CD8-positive, alpha-beta T cell (primary cell): ENCODE measurements at regions of chr11 and their contacts with region 1.

Region 1: DNA sequence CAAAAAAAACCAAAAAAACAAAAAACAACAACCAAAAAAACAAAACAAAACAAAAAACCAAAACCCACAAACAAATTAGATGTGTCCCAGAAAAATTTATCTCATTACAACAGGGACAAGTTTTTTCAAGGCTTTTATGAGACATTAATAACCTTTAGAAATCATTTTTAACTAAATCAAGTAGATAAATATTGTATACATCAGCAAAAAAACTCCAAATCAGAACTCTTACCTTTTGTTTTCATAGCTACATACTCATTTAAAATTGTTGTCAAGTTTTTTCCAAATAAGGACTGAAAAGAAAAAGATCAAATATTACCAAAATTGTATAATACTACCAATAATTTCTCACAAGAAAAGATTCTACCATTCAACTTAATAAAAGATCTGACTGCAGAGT is 28.7 kb downstream of the NPAT start:
- DNase-seq: no peak
- ATAC-seq: no peak
- H3K4me3 ChIP-seq: no peak overlapping the region
- H3K4me3 Mint-ChIP-seq: no peak overlapping the region
- H3K27ac ChIP-seq: no peak overlapping the region
- H3K27ac Mint-ChIP-seq: no peak overlapping the region
- H3K4me1 ChIP-seq: peaks cover 12% of the 10 kb centered on the region
- H3K4me1 Mint-ChIP-seq: peaks cover 32% of the 10 kb centered on the region
- H3K27me3 ChIP-seq: no peaks in the 10 kb centered on the region
- H3K27me3 Mint-ChIP-seq: no peaks in the 10 kb centered on the region
- CTCF ChIP-seq: no peak

Region 2: DNA sequence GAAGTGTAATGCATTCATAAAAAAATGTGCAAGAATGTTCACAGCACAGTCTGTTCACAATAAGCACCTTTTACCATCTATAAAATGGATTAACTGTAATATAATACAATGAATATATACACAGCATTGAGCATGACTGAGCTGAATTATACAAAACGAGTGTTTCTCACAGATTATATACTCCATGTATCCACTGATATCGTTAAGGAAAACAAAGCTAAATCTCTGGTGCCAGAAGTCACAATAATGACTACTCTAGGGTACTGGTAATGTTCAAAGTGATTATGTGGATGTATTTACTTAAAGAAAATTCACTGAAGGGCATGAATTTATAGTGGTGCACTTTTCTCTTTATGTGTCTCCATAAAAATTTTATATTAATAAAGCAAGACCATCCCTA is 39.1 kb before region 1 on chr11:
- CTCF ChIA-PET with region 1: no interaction called
- POLR2A ChIA-PET with region 1: no interaction called
- intact Hi-C with region 1: loop called in 1 of 2 experiments (anchors 5 kb)
- DNase-seq: no peak
- ATAC-seq: no peak
- H3K4me3 ChIP-seq: no peak overlapping the region
- H3K4me3 Mint-ChIP-seq: no peak overlapping the region
- H3K27ac ChIP-seq: no peak overlapping the region
- H3K27ac Mint-ChIP-seq: no peak overlapping the region
- H3K4me1 ChIP-seq: no peaks in the 10 kb centered on the region
- H3K4me1 Mint-ChIP-seq: peaks cover 5% of the 10 kb centered on the region
- H3K27me3 ChIP-seq: no peaks in the 10 kb centered on the region
- H3K27me3 Mint-ChIP-seq: no peaks in the 10 kb centered on the region
- CTCF ChIP-seq: no peak

Region 3: DNA sequence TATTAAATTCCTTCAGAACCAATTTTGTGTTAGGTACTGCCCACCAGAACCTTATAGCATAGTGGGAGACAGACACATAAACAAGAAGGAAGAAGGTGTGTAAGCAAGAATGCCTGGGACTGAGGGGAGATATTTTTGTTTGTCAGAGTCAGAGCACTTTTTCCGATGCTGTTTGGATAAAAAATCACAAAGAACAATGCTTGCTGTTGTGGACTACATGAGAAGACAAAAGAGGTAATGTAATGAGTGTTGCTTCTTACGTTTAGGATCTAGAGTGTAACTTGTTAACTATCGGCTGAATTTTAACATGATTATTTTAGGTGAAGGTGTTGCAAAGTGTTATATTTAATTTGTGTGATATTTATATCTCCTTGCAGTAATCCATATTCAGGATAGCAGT is 114.0 kb after region 1 on chr11:
- CTCF ChIA-PET with region 1: no interaction called
- POLR2A ChIA-PET with region 1: no interaction called
- intact Hi-C with region 1: loop called in 1 of 2 experiments (anchors 5 kb)
- DNase-seq: no peak
- ATAC-seq: no peak
- H3K4me3 ChIP-seq: no peak overlapping the region
- H3K4me3 Mint-ChIP-seq: no peak overlapping the region
- H3K27ac ChIP-seq: no peak overlapping the region
- H3K27ac Mint-ChIP-seq: peak overlapping the region; percentile 69
- H3K4me1 ChIP-seq: no peaks in the 10 kb centered on the region
- H3K4me1 Mint-ChIP-seq: peaks cover 46% of the 10 kb centered on the region
- H3K27me3 ChIP-seq: no peaks in the 10 kb centered on the region
- H3K27me3 Mint-ChIP-seq: no peaks in the 10 kb centered on the region
- CTCF ChIP-seq: no peak

Region 4: GRCh38 chr11:108453207-108453835 is 259.6 kb after region 1 on chr11:
- CTCF ChIA-PET with region 1: no interaction called
- POLR2A ChIA-PET with region 1: no interaction called
- intact Hi-C with region 1: no loop called
- DNase-seq: no peak
- ATAC-seq: no peak
- H3K4me3 ChIP-seq: no peak overlapping the region
- H3K4me3 Mint-ChIP-seq: no peak overlapping the region
- H3K27ac ChIP-seq: no peak overlapping the region
- H3K27ac Mint-ChIP-seq: no peak overlapping the region
- H3K4me1 ChIP-seq: no peaks in the 10 kb centered on the region
- H3K4me1 Mint-ChIP-seq: no peaks in the 10 kb centered on the region
- H3K27me3 ChIP-seq: no peaks in the 10 kb centered on the region
- H3K27me3 Mint-ChIP-seq: no peaks in the 10 kb centered on the region
- CTCF ChIP-seq: no peak